ENCODE measurements at regions of chr4 and their contacts with region 1.

Region 1: DNA sequence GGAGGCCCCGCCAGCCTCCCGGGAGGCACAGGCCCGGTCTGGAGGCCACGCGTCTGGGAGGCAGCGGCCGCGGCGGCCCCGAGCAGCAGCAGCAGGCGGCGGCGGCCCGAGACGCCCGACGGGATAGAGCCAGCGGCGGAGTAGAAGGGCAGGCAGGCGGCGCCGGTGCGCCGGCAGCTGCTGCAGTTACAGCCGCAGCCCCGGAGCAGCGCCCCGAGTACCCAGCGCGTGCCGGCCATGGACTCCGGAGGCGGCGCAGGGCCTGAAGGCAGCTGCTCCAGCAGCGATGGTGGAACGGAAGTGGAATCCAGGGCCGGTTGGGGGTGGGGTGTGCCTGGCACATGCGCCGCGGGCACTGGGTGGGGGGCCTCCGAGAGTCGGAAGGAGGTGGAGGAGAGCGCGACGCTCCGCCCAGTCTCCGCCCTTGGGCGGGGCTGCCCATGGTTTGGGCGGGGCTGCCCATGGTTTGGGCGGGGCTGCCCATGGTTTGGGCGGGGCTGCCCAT is at the start of gene GRSF1:
- DNase-seq: peak; percentile 80
- H3K4me3 ChIP-seq: peak within 1 kb of the TSS; percentile 99
- H3K27ac ChIP-seq: peak within 1 kb of the TSS; percentile 61
- H3K27me3 ChIP-seq: no peaks in the 10 kb centered on the region
- CTCF ChIP-seq: peak; percentile 15; the same call in 1 of the 2 replicates
- polyA plus RNA-seq, gene GRSF1: 85.7 and 120 TPM in 2 replicates

Region 2: GRCh38 chr4:70901984-70902576 is 62.4 kb after region 1 on chr4 and contains the start of gene MOB1B:
- CTCF ChIA-PET with region 1: interaction called, 5 read pairs
- POLR2A ChIA-PET with region 1: interaction called, 17 read pairs
- DNase-seq: peak; percentile 74
- H3K4me3 ChIP-seq: peak within 1 kb of the TSS; percentile 88
- H3K27ac ChIP-seq: peak within 1 kb of the TSS; percentile 73
- H3K27me3 ChIP-seq: no peaks in the 10 kb centered on the region
- CTCF ChIP-seq: peak; percentile 39
- polyA plus RNA-seq, gene MOB1B: 17.8 and 21.4 TPM in 2 replicates

Region 3: GRCh38 chr4:71107726-71108125 is 268.1 kb after region 1 on chr4:
- CTCF ChIA-PET with region 1: no interaction called
- POLR2A ChIA-PET with region 1: interaction called, 10 read pairs
- DNase-seq: no peak
- H3K4me3 ChIP-seq: no peak overlapping the region
- H3K27ac ChIP-seq: no peak overlapping the region
- H3K27me3 ChIP-seq: no peaks in the 10 kb centered on the region
- CTCF ChIP-seq: no peak